ENCODE measurements at regions of chr14 and their contacts with region 1.

Region 1: DNA sequence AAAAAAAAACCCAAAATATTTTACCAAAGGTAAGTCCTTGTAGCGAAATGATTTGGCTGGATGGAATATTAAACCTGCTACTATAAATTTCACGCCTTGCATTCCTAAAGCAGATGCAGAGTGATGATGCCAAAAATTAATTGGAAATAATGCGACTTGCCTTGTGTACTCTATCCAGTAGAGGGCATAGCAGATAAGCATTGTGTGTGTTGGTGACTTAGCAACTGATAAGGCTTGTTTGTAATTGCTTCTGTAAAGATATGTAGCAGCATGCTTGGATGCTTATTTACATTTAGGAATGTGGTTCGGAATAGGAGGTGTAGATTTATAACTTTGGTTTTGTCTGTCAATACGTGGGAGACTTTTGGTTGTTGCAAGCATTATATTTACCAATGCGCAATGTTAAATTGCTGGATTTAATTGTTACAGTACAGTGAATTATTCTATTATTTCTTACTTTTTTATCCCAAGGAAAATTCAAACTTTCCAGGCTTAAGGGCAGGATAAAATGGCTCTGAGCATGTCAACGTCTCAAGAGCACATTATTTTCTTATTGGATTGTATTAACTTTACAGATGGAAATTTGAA is 80.5 kb downstream of the TMEM260 start:
- DNase-seq: peak; percentile 1 to 71
- H3K4me3 ChIP-seq: no peak overlapping the region
- H3K27ac ChIP-seq: no peak overlapping the region
- H3K4me1 ChIP-seq: no peaks in the 10 kb centered on the region
- H3K27me3 ChIP-seq: no peaks in the 10 kb centered on the region
- CTCF ChIP-seq: peak; percentile 82

Region 2: DNA sequence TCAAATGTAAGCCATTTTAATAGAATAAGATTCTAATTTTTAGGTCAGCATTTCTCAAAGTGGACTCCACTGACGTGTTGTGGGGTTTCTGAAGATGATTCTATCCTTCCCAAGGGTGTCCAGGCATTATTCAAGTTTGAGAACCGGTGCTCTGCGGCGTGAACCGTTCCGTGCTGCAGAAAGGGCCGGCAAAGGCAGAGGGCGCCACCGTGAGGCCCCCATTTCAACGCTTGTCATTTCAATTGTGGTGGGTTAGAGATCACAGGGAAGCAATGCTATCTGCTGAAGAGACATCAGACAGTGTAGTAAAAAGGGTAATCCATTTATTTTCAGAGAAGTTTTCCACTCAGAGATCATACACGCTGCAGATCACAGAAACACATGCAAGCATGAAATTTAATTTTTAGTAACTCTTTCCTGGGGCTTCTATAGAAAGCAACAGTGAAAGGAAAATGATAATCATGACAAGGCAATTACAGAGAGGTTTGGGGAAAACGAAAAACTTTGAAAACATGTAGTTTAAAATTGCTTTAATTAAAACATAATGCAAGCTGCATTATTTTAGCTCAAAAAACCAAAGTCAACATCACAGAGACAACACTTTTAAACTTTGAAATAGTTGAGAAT is 406.9 kb after region 1 on chr14:
- CTCF ChIA-PET with region 1: no interaction called
- POLR2A ChIA-PET with region 1: no interaction called
- intact Hi-C with region 1: loop called (anchors 5 kb)
- DNase-seq: peak in 1 of 2 experiments; percentile 18
- H3K4me3 ChIP-seq: no peak overlapping the region
- H3K27ac ChIP-seq: no peak overlapping the region
- H3K4me1 ChIP-seq: no peaks in the 10 kb centered on the region
- H3K27me3 ChIP-seq: no peaks in the 10 kb centered on the region
- CTCF ChIP-seq: 0 out of 2 replicates have a peak, but pooled peaks have one; percentile 28

Region 3: GRCh38 chr14:57293866-57294837 is 634.1 kb after region 1 on chr14:
- CTCF ChIA-PET with region 1: no interaction called
- POLR2A ChIA-PET with region 1: no interaction called
- intact Hi-C with region 1: loop called (anchors 10 kb)
- DNase-seq: no peak
- H3K4me3 ChIP-seq: no peak overlapping the region
- H3K27ac ChIP-seq: no peak overlapping the region
- H3K4me1 ChIP-seq: peaks cover 15% of the 10 kb centered on the region
- H3K27me3 ChIP-seq: no peaks in the 10 kb centered on the region
- CTCF ChIP-seq: peak; percentile 67

Measured in PC-9 (cell line).